ENCODE measurements at regions of chr2 and their contacts with region 1.

Region 1: DNA sequence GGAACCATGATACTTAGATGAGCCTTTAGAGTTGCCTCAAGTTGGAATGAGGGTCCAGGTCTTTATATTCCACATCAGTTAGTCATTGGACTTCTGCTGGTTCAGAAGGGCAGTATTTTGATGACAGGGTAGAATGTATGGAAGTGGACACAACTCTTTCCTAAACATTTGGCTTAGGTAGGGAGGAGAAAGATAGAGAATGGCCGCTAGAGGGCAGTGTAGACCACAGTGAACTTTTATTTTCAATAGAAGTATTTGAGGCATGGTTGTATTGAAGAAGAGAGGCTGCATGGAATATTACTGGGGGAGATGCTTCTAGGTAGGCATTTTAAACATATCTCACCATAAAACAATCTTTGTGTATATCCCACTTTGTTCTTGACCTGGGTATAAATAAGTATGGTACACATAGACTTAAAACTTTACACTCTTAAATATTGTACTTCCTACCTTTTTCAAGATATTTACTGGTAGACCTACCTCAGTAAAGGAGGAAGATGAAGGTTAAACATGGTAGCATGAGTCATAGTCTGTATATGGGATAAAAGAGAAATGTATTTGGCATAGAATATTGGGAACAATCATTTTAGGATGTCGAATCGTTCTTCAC is 497.6 kb upstream of the FAM98A start:
- DNase-seq: peak; percentile 36
- H3K4me3 ChIP-seq: no peak overlapping the region
- H3K27ac ChIP-seq: no peak overlapping the region
- H3K4me1 ChIP-seq: no peaks in the 10 kb centered on the region
- H3K27me3 ChIP-seq: no peaks in the 10 kb centered on the region
- CTCF ChIP-seq: peak; percentile 96
- EP300 ChIP-seq: no peak
- RAD21 ChIP-seq: peak; percentile 86

Region 2: DNA sequence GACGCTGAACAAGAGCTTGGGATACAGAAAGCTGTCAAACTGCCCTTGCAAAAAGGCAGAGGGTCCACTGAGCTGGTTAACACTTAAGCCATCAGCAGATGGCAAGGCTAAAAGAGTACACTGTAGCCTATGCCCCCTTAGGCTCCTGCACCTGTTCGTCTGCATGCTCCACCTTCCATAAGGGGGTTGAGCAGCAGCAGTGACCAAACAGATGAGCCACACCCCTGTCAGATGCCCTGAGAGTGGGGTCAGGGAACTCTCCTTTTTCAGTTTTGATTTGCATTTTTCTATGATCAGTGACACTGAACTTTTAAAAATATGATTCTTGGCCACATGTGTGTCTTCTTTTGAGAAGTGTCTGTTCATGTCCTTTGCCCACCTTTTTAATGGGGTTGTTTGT is 95.1 kb before region 1 on chr2:
- CTCF ChIA-PET with region 1: no interaction called
- POLR2A ChIA-PET with region 1: no interaction called
- DNase-seq: no peak
- H3K4me3 ChIP-seq: no peak overlapping the region
- H3K27ac ChIP-seq: no peak overlapping the region
- H3K4me1 ChIP-seq: no peaks in the 10 kb centered on the region
- H3K27me3 ChIP-seq: no peaks in the 10 kb centered on the region
- CTCF ChIP-seq: no peak
- EP300 ChIP-seq: no peak
- RAD21 ChIP-seq: no peak

Region 3: GRCh38 chr2:34570266-34570872 is 473.7 kb after region 1 on chr2:
- CTCF ChIA-PET with region 1: interaction called, 14 read pairs
- POLR2A ChIA-PET with region 1: no interaction called
- DNase-seq: peak; percentile 14
- H3K4me3 ChIP-seq: no peak overlapping the region
- H3K27ac ChIP-seq: no peak overlapping the region
- H3K4me1 ChIP-seq: no peaks in the 10 kb centered on the region
- H3K27me3 ChIP-seq: no peaks in the 10 kb centered on the region
- CTCF ChIP-seq: peak; percentile 36
- EP300 ChIP-seq: no peak
- RAD21 ChIP-seq: peak; percentile 57